ENCODE measurements at regions of chr7 and their contacts with region 1.

Region 1: DNA sequence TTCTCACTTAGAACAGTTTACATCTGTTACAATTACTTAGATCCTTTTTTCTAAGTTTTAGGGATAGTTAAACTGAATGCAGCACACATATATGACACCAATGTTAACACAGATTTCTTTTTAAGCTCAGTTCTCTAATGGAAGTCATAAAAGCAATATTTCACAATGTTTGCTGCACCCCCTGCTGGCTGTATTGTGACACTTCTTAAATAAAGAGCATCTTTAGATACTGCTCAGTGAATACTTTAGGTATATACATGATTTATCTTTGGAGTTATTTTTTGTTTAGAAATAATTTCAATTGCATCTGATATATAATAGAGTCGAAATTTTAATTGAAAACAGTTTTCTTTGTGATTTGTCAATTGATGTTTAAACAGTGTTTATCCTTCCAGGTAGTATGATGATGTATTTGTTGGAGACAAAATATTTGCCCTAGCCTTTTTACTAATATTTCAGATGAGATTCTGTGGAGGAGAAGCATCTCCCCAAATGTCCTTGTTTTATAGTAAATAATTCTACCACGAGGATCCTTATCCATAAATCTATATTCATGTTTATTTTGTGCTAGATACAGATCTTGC is 174.4 kb downstream of the ST7 start:
- DNase-seq: peak in 2 of 6 donors; percentile 18 to 40
- ATAC-seq: peak in 3 of 4 donors; percentile 63 to 74 (median 70)
- H3K4me3 ChIP-seq: no peak overlapping the region
- H3K27ac ChIP-seq: no peak overlapping the region
- H3K4me1 ChIP-seq: peaks cover 5 to 9% (median 7%) of the 10 kb centered on the region in 3 donors
- H3K27me3 ChIP-seq: no peaks in the 10 kb centered on the region
- CTCF ChIP-seq: peak; percentile 32 to 71 (median 50)

Region 2: DNA sequence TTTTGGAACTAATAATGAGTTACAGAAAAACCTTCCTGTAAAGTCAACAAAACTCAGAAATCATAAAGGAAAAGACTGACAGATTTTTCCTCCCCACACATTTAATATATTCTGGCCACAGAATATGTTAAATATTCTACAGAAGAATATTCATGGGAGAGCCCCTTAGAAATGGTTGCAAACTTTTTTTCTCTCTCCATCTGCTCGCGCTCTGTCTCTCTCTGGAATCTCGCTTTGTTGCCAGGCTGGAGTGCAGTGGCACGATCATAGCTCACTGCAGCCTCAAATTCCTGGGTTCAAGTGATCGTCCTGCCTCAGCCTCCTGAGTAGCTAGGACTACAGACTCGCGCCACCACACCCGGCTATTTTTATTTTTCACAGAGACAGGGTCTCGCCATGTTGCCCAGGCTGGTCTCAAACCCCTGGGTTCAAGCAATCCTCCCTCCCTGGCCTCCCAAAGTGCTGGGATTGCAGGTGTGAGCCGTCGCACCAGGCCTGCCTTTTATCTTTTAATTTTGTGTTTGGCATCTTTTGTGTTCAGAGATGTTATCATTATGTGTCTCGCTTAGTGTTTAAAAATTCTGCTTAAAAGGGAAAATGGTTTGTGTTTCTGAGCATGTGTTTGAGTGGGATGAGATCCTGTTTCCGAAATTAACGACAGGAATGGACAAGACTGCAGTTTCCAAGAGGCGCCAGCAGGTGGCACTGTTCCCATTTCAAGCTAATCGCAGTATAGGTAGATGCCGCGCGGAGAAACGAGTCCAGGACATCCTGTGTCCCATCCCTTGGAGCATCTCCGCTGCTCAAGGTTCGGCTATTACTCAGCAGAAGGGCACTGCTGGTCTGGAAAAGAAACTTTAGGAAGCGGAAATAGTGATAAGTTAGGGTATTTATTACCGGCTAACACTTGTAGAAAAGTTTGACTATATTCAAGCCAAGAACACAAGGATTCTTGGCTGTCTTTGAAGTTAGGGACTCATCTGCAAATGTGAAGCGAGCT is 197.5 kb before region 1 on chr7:
- intact Hi-C with region 1: loop called in 1 of 3 experiments (anchors 5 kb)
- DNase-seq: peak; percentile 47 to 92 (median 78)
- ATAC-seq: peak; percentile 78 to 98 (median 96)
- H3K4me3 ChIP-seq: no peak overlapping the region
- H3K27ac ChIP-seq: no peak overlapping the region
- H3K4me1 ChIP-seq: no peaks in the 10 kb centered on the region
- H3K27me3 ChIP-seq: no peaks in the 10 kb centered on the region
- CTCF ChIP-seq: peak; percentile 84 to 95 (median 86)

Region 3: GRCh38 chr7:116984917-116985316 is 142.8 kb before region 1 on chr7:
- intact Hi-C with region 1: loop called in 1 of 3 experiments (anchors 5 kb)
- DNase-seq: no peak
- ATAC-seq: peak; percentile 61 to 84 (median 74)
- H3K4me3 ChIP-seq: no peak overlapping the region
- H3K27ac ChIP-seq: no peak overlapping the region
- H3K4me1 ChIP-seq: no peaks in the 10 kb centered on the region
- H3K27me3 ChIP-seq: no peaks in the 10 kb centered on the region
- CTCF ChIP-seq: peak in 3 of 4 donors; percentile 39 to 56 (median 53)

Measured in pancreas (tissue), 10 donors.